IMR-90 (cell line): ENCODE measurements at regions of chr6 and their contacts with region 1.

Region 1: GRCh38 chr6:112253841-112254816 is at the start of gene LAMA4:
- DNase-seq: peak; percentile 69
- ATAC-seq: peak; percentile 69
- H3K4me3 ChIP-seq: peak within 1 kb of the TSS; percentile 89
- H3K27ac ChIP-seq: peak within 1 kb of the TSS; percentile 89
- H3K4me1 ChIP-seq: peaks cover 6% of the 10 kb centered on the region
- H3K27me3 ChIP-seq: no peaks in the 10 kb centered on the region
- CTCF ChIP-seq: no peak
- POLR2A ChIP-seq: peak; percentile 52; the same call in 1 of the 2 replicates
- RAD21 ChIP-seq: peak; percentile 2; the same call in 1 of the 2 replicates
- total RNA-seq, gene LAMA4: 29.7 and 35.8 TPM in 2 replicates

Region 2: GRCh38 chr6:112109262-112109661 is 144.9 kb before region 1 on chr6:
- CTCF ChIA-PET with region 1: no interaction called
- POLR2A ChIA-PET with region 1: no interaction called
- dilution Hi-C with region 1: no loop called
- in situ Hi-C with region 1: no loop called
- intact Hi-C with region 1: no loop called
- DNase-seq: no peak
- ATAC-seq: no peak
- H3K4me3 ChIP-seq: no peak overlapping the region
- H3K27ac ChIP-seq: no peak overlapping the region
- H3K4me1 ChIP-seq: peaks cover 2% of the 10 kb centered on the region; the same call in 1 of the 2 replicates
- H3K27me3 ChIP-seq: no peaks in the 10 kb centered on the region
- CTCF ChIP-seq: no peak
- POLR2A ChIP-seq: no peak
- RAD21 ChIP-seq: no peak

Region 3: GRCh38 chr6:112203577-112204349 is 50.4 kb before region 1 on chr6:
- CTCF ChIA-PET with region 1: no interaction called
- POLR2A ChIA-PET with region 1: no interaction called
- dilution Hi-C with region 1: no loop called
- in situ Hi-C with region 1: no loop called
- intact Hi-C with region 1: loop called (anchors 2 kb)
- DNase-seq: peak; percentile 95
- ATAC-seq: peak; percentile 73
- H3K4me3 ChIP-seq: peak overlapping the region; percentile 17; the same call in 1 of the 2 replicates
- H3K27ac ChIP-seq: peak overlapping the region; percentile 83
- H3K4me1 ChIP-seq: peaks cover 18% of the 10 kb centered on the region
- H3K27me3 ChIP-seq: no peaks in the 10 kb centered on the region
- CTCF ChIP-seq: no peak
- POLR2A ChIP-seq: peak; percentile 29; the same call in 1 of the 2 replicates
- RAD21 ChIP-seq: no peak

Region 4: DNA sequence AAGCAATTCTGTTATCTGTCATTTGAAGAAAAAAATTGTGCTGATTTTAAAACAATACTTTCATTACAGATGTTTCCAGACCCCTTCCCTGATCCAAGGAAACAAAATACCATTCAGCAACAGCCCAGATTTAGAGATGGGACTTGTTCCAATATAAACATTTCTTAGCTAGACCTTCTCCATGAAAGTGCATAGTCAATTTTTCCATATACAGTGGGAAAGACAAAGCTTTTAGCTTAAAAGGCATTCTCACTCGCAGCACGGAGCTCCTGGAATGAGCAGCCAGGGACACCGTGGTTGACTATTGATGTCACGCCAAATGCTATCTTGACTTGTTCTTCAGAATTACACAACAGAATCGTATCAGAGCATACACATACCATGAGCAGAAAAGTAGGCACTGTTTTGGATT is 21.3 kb before region 1 on chr6:
- CTCF ChIA-PET with region 1: no interaction called
- POLR2A ChIA-PET with region 1: no interaction called
- dilution Hi-C with region 1: no loop called
- in situ Hi-C with region 1: no loop called
- intact Hi-C with region 1: loop called (anchors 1 kb)
- DNase-seq: peak; percentile 80
- ATAC-seq: peak; percentile 19
- H3K4me3 ChIP-seq: no peak overlapping the region
- H3K27ac ChIP-seq: peak overlapping the region; percentile 69; the same call in 1 of the 2 replicates
- H3K4me1 ChIP-seq: peaks cover 17% of the 10 kb centered on the region
- H3K27me3 ChIP-seq: no peaks in the 10 kb centered on the region
- CTCF ChIP-seq: no peak
- POLR2A ChIP-seq: no peak
- RAD21 ChIP-seq: no peak

Region 5: GRCh38 chr6:112311950-112312547 is 57.9 kb after region 1 on chr6:
- CTCF ChIA-PET with region 1: no interaction called
- POLR2A ChIA-PET with region 1: interaction called, 3 read pairs
- dilution Hi-C with region 1: no loop called
- in situ Hi-C with region 1: no loop called
- intact Hi-C with region 1: loop called (anchors 1 kb)
- DNase-seq: peak; percentile 38
- ATAC-seq: peak; percentile 49; the same call in 1 of the 2 replicates
- H3K4me3 ChIP-seq: no peak overlapping the region
- H3K27ac ChIP-seq: no peak overlapping the region
- H3K4me1 ChIP-seq: peaks cover 5% of the 10 kb centered on the region; the same call in 1 of the 2 replicates
- H3K27me3 ChIP-seq: no peaks in the 10 kb centered on the region
- CTCF ChIP-seq: peak; percentile 73
- POLR2A ChIP-seq: no peak
- RAD21 ChIP-seq: peak; percentile 87